ENCODE measurements at regions of chr4 and their contacts with region 1.

Region 1: GRCh38 chr4:8099981-8100464 is 58.6 kb downstream of the ABLIM2 start:
- DNase-seq: no peak

Region 2: GRCh38 chr4:6198768-6199421 is 1901.1 kb before region 1 on chr4:
- intact Hi-C with region 1: loop called in 1 of 2 experiments (anchors 5 kb)
- DNase-seq: peak; percentile 75

Region 3: DNA sequence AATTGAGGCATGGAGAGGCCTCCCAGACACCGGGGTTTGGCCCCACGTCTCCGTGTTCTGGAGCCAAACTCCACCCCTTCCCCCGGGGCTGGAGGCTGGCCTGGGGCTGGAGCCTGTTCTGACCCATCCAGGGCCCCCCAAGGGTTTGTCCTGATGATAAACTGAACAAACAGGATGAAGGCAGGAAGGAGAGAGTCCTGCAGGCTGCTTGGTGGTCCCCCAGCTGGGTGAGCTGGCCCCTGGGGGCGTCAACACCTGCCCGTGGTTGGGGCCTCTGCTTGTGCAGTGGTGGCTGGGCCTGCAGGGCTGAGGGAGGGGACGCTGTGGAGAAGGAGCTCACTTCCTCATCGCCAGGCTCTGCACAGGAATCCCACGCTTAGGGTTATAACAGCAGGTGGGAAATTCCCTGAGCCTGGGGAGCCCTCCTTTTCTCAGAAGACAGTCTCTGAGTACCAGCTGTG is 101.3 kb after region 1 on chr4:
- intact Hi-C with region 1: no loop called
- DNase-seq: no peak